ENCODE measurements at regions of chr17 and their contacts with region 1.

Region 1: GRCh38 chr17:48892940-48893645 is 506 bp downstream of the ATP5MC1 start:
- DNase-seq: no peak
- ATAC-seq: no peak
- H3K4me3 ChIP-seq: peak overlapping the region; percentile 95
- H3K27ac ChIP-seq: peak overlapping the region; percentile 69
- H3K4me1 ChIP-seq: peaks cover 29% of the 10 kb centered on the region
- H3K27me3 ChIP-seq: no peaks in the 10 kb centered on the region
- CTCF ChIP-seq: no peak

Region 2: DNA sequence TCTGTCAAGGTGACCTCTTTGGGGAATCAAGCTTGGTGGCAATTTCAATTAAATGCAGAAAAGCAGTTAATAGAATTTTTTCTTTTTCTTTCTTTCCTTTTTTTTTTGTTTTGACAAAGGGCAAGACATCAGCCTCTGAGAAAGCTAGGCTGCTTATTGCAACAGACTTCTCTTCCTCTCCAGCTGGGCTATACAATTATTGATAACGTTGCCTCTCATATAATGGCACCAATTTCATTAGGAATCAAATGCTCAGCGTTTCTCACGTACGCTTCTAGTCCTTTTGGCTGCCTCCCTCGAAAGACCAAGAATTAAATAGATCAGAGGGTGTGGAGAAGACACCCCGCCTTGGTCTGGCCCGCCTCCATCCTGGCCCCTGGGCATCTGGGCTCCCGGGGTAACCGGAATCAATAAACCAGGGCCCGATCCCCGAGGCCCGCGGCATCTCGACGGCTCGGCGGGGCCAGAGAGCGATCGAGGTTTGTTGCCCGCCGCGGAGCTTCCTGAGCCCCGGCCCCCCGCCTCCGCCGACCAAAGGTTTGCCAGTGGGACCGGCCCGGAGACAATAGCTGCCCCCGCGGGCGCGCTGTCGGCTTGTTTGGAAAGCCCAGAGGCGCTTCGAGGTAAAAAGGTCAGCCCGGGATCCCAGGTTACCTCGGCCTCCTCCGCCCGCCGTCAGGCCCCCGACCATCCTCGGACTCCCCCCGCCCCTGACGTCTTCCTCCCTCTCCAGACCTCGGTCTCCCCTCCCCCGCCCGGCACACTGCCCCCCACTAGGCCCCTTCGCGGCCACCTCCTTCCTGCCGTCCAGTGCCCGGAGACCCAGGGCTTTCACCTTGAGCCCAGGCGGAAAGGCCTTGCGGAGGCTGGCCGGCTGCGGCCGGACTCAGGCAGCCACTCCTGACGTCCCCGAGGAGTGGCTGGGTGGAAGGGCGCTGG is 366.2 kb before region 1 on chr17:
- CTCF ChIA-PET with region 1: no interaction called
- POLR2A ChIA-PET with region 1: no interaction called
- intact Hi-C with region 1: no loop called
- DNase-seq: no peak
- ATAC-seq: no peak
- H3K4me3 ChIP-seq: no peak overlapping the region
- H3K27ac ChIP-seq: no peak overlapping the region
- H3K4me1 ChIP-seq: peaks cover 10% of the 10 kb centered on the region
- H3K27me3 ChIP-seq: no peaks in the 10 kb centered on the region
- CTCF ChIP-seq: no peak

Region 3: DNA sequence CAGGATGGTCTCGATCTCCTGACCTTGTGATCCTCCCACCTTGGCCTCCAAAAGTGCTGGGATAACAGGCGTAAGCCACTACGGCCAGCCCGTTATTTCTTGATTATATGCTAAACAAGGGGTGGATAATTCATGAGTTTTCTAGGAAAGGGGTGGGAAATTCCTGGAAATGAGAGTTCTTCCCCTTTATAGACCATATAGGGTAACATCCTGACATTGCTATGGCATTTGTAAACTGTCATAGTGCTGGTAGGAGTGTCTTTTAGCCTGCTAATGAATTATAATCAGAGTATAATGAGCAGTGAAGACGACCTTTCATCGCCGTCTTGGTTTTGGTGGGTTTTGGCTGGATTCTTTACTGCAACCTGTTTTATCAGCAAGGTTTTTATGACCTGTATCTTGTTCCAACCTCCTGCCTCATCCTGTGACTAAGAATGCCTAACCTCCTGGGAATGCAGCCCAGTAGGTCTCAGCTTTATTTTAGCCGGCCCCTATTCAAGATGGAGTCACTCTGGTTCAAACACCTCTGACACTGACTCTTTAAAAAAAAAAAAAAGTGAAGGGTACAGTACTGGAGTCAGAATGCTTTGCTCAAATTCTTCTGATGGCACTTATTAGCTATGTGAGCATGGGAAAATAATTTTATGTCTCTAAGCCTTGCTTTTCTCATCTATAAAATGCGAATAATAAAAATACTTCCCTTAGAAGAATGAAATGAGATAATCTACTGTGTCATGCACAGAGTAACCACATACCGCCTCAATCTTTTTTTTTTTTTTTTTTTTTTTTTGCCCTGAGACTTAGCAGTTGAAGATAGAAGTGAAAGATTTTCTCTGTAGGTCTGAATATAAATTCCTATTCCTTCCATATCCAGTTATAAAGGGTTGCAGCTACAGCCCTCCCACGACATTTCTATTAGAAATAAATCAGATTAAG is 67.4 kb before region 1 on chr17:
- CTCF ChIA-PET with region 1: no interaction called
- POLR2A ChIA-PET with region 1: interaction called, 16 read pairs
- intact Hi-C with region 1: no loop called
- DNase-seq: peak; percentile 96
- ATAC-seq: peak; percentile 74
- H3K4me3 ChIP-seq: no peak overlapping the region
- H3K27ac ChIP-seq: peak overlapping the region; percentile 65
- H3K4me1 ChIP-seq: peaks cover 25% of the 10 kb centered on the region
- H3K27me3 ChIP-seq: no peaks in the 10 kb centered on the region
- CTCF ChIP-seq: no peak

Region 4: GRCh38 chr17:48873209-48873608 is 19.9 kb before region 1 on chr17:
- CTCF ChIA-PET with region 1: no interaction called
- POLR2A ChIA-PET with region 1: interaction called, 10 read pairs
- intact Hi-C with region 1: no loop called
- DNase-seq: no peak
- ATAC-seq: peak; percentile 35
- H3K4me3 ChIP-seq: no peak overlapping the region
- H3K27ac ChIP-seq: no peak overlapping the region
- H3K4me1 ChIP-seq: peaks cover 4% of the 10 kb centered on the region; the same call in 1 of the 2 replicates
- H3K27me3 ChIP-seq: no peaks in the 10 kb centered on the region
- CTCF ChIP-seq: no peak

Region 5: GRCh38 chr17:48908047-48908843 is 15.2 kb after region 1 on chr17 and contains the start of gene UBE2Z:
- CTCF ChIA-PET with region 1: interaction called, 4 read pairs
- POLR2A ChIA-PET with region 1: interaction called, 3 read pairs
- intact Hi-C with region 1: loop called (anchors 1 kb)
- DNase-seq: peak; percentile 98
- ATAC-seq: peak; percentile 93
- H3K4me3 ChIP-seq: peak within 1 kb of the TSS; percentile 85
- H3K27ac ChIP-seq: peak within 1 kb of the TSS; percentile 74
- H3K4me1 ChIP-seq: peaks cover 36% of the 10 kb centered on the region
- H3K27me3 ChIP-seq: no peaks in the 10 kb centered on the region
- CTCF ChIP-seq: peak; percentile 40; the same call in 1 of the 2 replicates
- total RNA-seq, gene UBE2Z: 131 and 144 TPM in 2 replicates

Region 6: DNA sequence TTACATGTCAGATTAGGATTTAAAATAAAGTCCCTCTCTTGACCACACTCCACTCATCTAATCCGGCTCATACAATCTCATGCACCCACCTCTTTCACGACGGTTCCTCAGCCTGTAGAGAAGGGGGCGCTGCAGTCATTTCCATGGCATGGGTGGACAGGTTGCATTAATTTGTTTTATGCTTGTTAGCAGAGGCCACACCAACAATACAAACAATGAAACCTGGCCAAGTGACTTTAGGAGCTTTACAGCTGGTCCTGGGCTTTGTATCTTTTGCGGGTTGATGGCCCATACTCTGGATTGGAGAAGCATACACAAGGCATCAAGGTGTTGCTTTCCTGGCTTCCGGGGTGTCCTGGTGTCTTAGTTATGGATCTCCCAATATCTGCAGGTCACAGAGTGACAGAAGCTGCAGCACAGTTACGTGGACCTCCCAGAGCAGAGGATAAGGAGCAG is 61.2 kb after region 1 on chr17:
- CTCF ChIA-PET with region 1: no interaction called
- POLR2A ChIA-PET with region 1: no interaction called
- intact Hi-C with region 1: no loop called
- DNase-seq: peak; percentile 81
- ATAC-seq: peak; percentile 97
- H3K4me3 ChIP-seq: no peak overlapping the region
- H3K27ac ChIP-seq: no peak overlapping the region
- H3K4me1 ChIP-seq: peaks cover 4% of the 10 kb centered on the region; the same call in 1 of the 2 replicates
- H3K27me3 ChIP-seq: no peaks in the 10 kb centered on the region
- CTCF ChIP-seq: peak; percentile 92

Region 7: GRCh38 chr17:49063652-49064051 is 170.6 kb after region 1 on chr17:
- CTCF ChIA-PET with region 1: no interaction called
- POLR2A ChIA-PET with region 1: interaction called, 19 read pairs
- intact Hi-C with region 1: no loop called
- DNase-seq: no peak
- ATAC-seq: no peak
- H3K4me3 ChIP-seq: no peak overlapping the region
- H3K27ac ChIP-seq: no peak overlapping the region
- H3K4me1 ChIP-seq: peaks cover 5% of the 10 kb centered on the region; the same call in 1 of the 2 replicates
- H3K27me3 ChIP-seq: no peaks in the 10 kb centered on the region
- CTCF ChIP-seq: no peak

Region 8: DNA sequence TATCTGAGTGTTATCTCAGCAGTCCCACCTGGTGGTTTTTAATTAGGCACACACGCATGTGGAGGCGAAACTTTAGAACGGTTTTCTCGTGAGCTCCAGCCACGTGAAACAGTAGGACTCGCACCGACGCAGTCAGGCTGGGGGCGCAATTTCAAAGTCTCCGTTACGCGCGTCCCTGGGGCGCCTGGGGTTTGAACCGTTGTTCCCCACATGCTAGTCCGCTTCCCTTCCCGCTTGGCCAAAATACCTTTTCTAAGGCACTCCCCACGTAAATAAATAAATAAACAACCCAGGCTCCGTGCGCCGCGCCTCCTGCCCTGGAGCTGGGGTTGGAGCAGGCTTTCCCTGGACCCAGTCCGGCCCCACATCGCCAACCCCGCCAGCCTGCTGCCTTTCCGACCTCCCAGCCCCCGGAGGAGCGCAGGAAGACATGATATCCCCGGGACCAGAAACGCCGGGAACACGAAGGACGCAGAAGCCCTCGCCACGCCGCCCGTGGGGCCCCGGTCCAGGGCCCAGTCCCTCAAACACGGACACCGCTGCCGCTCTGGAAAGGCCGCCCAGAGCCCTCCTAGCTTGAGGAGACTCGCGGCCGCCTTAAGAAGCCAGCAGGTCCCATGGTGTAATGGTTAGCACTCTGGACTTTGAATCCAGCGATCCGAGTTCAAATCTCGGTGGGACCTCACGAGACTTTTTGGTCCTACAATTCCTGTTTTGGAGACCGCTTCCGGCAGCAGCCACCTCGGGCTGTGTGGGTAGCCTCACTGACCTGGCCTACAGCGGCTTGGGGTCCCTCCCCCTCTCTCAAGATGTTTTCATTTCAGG is 299.0 kb after region 1 on chr17:
- CTCF ChIA-PET with region 1: no interaction called
- POLR2A ChIA-PET with region 1: no interaction called
- intact Hi-C with region 1: loop called (anchors 5 kb)
- DNase-seq: peak; percentile 97
- ATAC-seq: peak; percentile 55
- H3K4me3 ChIP-seq: peak overlapping the region; percentile 79
- H3K27ac ChIP-seq: peak overlapping the region; percentile 77
- H3K4me1 ChIP-seq: peaks cover 10% of the 10 kb centered on the region
- H3K27me3 ChIP-seq: no peaks in the 10 kb centered on the region
- CTCF ChIP-seq: peak; percentile 55

Measured in PC-3 (cell line).